ENCODE measurements at regions of chr5 and their contacts with region 1.

Region 1: GRCh38 chr5:161544350-161544765 is 2.2 kb downstream of the GABRB2 start:
- DNase-seq: peak; percentile 42 to 57
- H3K4me3 ChIP-seq: no peak overlapping the region
- H3K4me3 Mint-ChIP-seq: no peak overlapping the region
- H3K27ac Mint-ChIP-seq: no peak overlapping the region
- H3K4me1 ChIP-seq: 0 out of 2 replicates have a peak, but pooled peaks cover 4% of the 10 kb centered on the region
- H3K4me1 Mint-ChIP-seq: peaks cover 10% of the 10 kb centered on the region
- H3K27me3 ChIP-seq: peaks cover 4% of the 10 kb centered on the region; the same call in 1 of the 2 replicates
- H3K27me3 Mint-ChIP-seq: peaks cover 25% of the 10 kb centered on the region
- CTCF ChIP-seq: peak; percentile 88 to 90

Region 2: DNA sequence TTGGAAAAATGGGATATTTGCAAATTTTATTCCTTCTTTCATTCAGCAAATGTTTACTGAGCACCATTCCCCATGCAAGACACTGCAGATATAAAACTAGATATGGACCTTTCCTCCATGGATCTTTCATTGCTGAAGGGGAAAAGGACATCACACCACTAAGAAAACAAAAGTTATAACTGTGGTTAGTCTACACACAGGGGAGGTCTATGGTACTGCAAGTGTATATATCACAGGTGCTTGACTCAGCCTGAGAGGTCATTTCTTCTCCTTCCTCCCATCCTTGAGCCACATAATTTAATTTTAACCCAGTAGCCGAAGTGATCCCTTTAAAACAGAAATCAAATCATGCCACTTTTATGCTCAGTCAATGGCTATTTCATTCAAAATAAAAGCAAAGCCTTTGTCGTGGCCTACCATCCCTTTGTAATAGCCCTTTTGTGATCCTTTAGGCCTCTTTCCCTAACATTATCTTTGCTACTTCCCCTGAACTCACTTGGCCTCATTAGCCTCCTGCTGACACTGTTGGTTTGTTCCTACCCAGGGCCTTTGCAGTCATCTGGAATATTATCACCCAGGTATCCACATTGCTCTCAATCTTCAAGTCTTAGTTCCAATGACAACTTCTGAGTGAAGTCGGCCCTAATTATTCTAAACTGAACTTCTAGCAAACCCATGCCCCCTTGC is 211.0 kb before region 1 on chr5:
- CTCF ChIA-PET with region 1: no interaction called
- POLR2A ChIA-PET with region 1: no interaction called
- intact Hi-C with region 1: no loop called
- DNase-seq: no peak
- H3K4me3 ChIP-seq: no peak overlapping the region
- H3K4me3 Mint-ChIP-seq: no peak overlapping the region
- H3K27ac Mint-ChIP-seq: no peak overlapping the region
- H3K4me1 ChIP-seq: no peaks in the 10 kb centered on the region
- H3K4me1 Mint-ChIP-seq: no peaks in the 10 kb centered on the region
- H3K27me3 ChIP-seq: no peaks in the 10 kb centered on the region
- H3K27me3 Mint-ChIP-seq: no peaks in the 10 kb centered on the region
- CTCF ChIP-seq: no peak

Region 3: DNA sequence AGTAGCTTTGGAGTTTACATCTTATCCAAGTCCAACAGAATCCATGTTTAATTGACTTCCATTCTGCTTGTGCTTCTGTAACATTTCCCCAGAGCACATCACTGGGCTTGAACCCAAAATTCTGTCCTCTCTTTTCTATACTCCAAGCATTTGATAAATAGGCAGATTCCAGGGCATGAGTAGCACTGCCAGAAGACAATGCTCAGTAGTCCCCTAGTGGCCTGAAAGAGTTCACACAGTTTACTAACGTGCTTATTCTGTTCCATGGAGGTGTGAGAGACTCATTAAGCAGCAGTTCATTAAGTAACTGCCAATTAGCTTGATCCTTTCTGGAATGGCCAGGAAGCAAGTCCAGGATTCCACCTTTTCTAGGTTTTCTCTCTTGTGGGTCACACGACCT is 131.7 kb after region 1 on chr5:
- CTCF ChIA-PET with region 1: no interaction called
- POLR2A ChIA-PET with region 1: no interaction called
- intact Hi-C with region 1: loop called (anchors 1 kb)
- DNase-seq: no peak
- H3K4me3 ChIP-seq: no peak overlapping the region
- H3K4me3 Mint-ChIP-seq: no peak overlapping the region
- H3K27ac Mint-ChIP-seq: no peak overlapping the region
- H3K4me1 ChIP-seq: no peaks in the 10 kb centered on the region
- H3K4me1 Mint-ChIP-seq: no peaks in the 10 kb centered on the region
- H3K27me3 ChIP-seq: no peaks in the 10 kb centered on the region
- H3K27me3 Mint-ChIP-seq: no peaks in the 10 kb centered on the region
- CTCF ChIP-seq: peak; percentile 34 to 70

Measured in Caco-2 (cell line).